A549 (cell line): ENCODE measurements at regions of chr3 and their contacts with region 1.

Region 1: GRCh38 chr3:122548076-122548475 is 16.0 kb downstream of the PARP9 start:
- DNase-seq: no peak
- ATAC-seq: no peak
- H3K4me3 ChIP-seq: no peak overlapping the region
- H3K27ac ChIP-seq: no peak overlapping the region
- H3K4me1 ChIP-seq: no peaks in the 10 kb centered on the region
- CTCF ChIP-seq: no peak
- EP300 ChIP-seq: no peak
- POLR2A ChIP-seq: no peak
- RAD21 ChIP-seq: no peak

Region 2: GRCh38 chr3:122564155-122564912 is 16.3 kb after region 1 on chr3 and contains the starts of genes DTX3L and PARP9:
- CTCF ChIA-PET with region 1: interaction called, 14 read pairs
- POLR2A ChIA-PET with region 1: no interaction called
- DNase-seq: peak; percentile 65 to 83
- ATAC-seq: peak; percentile 95 to 96
- H3K4me3 ChIP-seq: peak within 1 kb of the TSS; percentile 65
- H3K27ac ChIP-seq: peak within 1 kb of the TSS; percentile 90 to 94
- H3K4me1 ChIP-seq: peaks cover 6% of the 10 kb centered on the region; the same call in 1 of the 3 replicates
- CTCF ChIP-seq: no peak
- EP300 ChIP-seq: no peak
- POLR2A ChIP-seq: peak; percentile 35
- RAD21 ChIP-seq: no peak; a peak in 1 of 5 replicates
- polyA plus RNA-seq, gene DTX3L: 4.2 and 6.9 TPM in 2 replicates
- polyA plus RNA-seq, gene PARP9: 11.7 and 12.6 TPM in 2 replicates

Region 3: DNA sequence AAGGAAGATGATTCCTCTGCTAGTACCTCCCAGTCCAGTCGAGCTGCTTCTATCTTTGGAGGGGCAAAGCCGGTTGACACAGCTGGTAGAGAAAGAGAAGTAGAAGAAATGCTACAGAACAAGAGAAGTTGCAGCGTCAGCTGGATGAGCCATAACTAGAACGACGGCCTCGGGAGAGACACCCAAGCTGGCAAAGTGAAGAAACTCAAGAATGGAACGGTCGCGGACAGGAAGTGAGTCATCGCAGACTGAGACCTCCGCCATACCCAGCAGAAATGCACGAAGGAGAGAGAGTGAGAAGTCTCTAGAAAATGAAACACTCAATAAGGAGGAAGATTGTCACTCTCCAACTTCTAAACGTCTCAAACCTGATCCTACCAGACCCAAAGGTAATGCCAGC is 113.6 kb after region 1 on chr3:
- CTCF ChIA-PET with region 1: no interaction called
- POLR2A ChIA-PET with region 1: no interaction called
- DNase-seq: no peak
- ATAC-seq: no peak
- H3K4me3 ChIP-seq: no peak overlapping the region
- H3K27ac ChIP-seq: no peak overlapping the region
- H3K4me1 ChIP-seq: no peaks in the 10 kb centered on the region
- CTCF ChIP-seq: no peak
- EP300 ChIP-seq: no peak
- POLR2A ChIP-seq: no peak
- RAD21 ChIP-seq: no peak